ENCODE measurements at regions of chr10 and their contacts with region 1.

Region 1: DNA sequence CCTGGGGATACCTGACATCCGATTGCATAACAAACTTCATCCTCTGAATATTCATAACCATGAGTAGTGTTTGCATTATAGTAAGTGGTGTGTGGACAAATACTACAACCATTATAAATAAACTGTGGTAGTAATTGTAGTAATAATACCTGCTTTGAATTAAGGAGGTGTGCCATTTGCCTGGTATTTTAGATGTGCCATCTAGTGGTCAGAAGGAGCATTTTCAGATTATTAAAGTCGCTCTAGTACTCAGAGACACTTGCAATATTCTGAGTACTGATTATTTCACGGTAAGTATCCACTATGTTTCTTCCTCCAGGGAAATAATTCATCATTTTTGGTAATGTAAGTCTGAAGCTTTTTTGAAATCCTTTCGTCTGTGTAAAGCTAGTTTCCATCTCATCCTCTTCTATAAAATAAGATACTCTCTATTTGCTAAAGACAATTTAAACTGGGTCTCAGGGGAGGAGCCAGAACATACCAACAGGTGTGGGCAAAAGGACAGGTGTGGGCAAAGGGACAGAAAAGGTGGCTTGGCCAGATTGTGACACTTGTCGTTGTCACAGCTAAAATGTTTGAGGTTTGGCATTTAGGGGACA is 115.3 kb upstream of the WDR11 start:
- DNase-seq: no peak
- H3K4me3 Mint-ChIP-seq: no peak overlapping the region
- H3K27ac Mint-ChIP-seq: no peak overlapping the region
- H3K4me1 Mint-ChIP-seq: no peaks in the 10 kb centered on the region
- H3K27me3 Mint-ChIP-seq: peaks cover 2% of the 10 kb centered on the region

Region 2: GRCh38 chr10:120184547-120185337 is 551.1 kb before region 1 on chr10:
- CTCF ChIA-PET with region 1: no interaction called
- intact Hi-C with region 1: no loop called
- DNase-seq: no peak
- H3K4me3 Mint-ChIP-seq: no peak overlapping the region
- H3K27ac Mint-ChIP-seq: no peak overlapping the region
- H3K4me1 Mint-ChIP-seq: no peaks in the 10 kb centered on the region
- H3K27me3 Mint-ChIP-seq: no peaks in the 10 kb centered on the region

Region 3: GRCh38 chr10:120221873-120222485 is 513.9 kb before region 1 on chr10:
- CTCF ChIA-PET with region 1: interaction called, 4 read pairs
- intact Hi-C with region 1: loop called (anchors 10 kb)
- DNase-seq: peak; percentile 37
- H3K4me3 Mint-ChIP-seq: no peak overlapping the region
- H3K27ac Mint-ChIP-seq: no peak overlapping the region
- H3K4me1 Mint-ChIP-seq: no peaks in the 10 kb centered on the region
- H3K27me3 Mint-ChIP-seq: no peaks in the 10 kb centered on the region

Region 4: DNA sequence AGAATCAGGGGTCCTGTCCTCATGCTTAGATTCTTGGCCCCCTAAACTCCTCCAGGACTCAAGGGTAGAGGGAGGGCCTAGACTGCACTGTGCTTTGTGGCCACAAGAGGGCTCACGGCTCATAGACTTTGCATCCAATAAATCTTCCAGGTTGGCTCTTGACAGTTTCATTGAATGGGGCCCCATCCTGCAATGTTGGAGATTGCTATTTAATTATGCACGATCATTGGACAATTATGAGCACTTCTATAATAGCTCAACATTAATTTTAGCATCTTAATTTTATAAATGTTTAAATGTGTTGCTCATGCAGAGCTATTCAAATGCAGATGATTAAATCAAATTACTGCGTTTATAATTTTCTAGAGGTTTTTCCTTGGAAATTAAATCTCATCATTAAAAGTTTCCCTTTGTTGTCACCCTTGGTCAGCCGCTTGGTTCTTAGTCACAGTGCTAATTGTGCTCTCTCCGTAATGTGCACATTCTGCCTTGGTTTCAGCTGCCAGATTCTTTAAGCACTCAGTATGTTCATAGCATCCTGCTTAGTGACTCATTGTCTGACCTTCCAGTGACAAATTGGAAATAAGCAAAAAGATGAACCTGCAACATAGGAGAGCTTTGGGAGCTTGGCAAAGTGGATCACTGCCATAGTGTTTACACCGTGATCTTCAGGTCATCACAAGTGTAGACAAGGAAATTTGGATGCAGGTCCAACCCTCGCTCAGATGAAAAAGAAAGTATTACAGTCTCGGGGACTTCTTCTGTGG is 312.3 kb before region 1 on chr10:
- CTCF ChIA-PET with region 1: interaction called, 6 read pairs
- intact Hi-C with region 1: loop called (anchors 1 kb)
- DNase-seq: peak; percentile 52
- H3K4me3 Mint-ChIP-seq: no peak overlapping the region
- H3K27ac Mint-ChIP-seq: no peak overlapping the region
- H3K4me1 Mint-ChIP-seq: no peaks in the 10 kb centered on the region
- H3K27me3 Mint-ChIP-seq: no peaks in the 10 kb centered on the region